ENCODE measurements at regions of chr14 and their contacts with region 1.

Region 1: GRCh38 chr14:34098045-34098984 is 147.4 kb upstream of the EGLN3 start:
- DNase-seq: peak; percentile 53
- H3K4me3 ChIP-seq: no peak overlapping the region
- H3K27ac ChIP-seq: no peak overlapping the region
- H3K4me1 ChIP-seq: peaks cover 13% of the 10 kb centered on the region
- H3K27me3 ChIP-seq: no peaks in the 10 kb centered on the region
- CTCF ChIP-seq: peak; percentile 52 to 69

Region 2: DNA sequence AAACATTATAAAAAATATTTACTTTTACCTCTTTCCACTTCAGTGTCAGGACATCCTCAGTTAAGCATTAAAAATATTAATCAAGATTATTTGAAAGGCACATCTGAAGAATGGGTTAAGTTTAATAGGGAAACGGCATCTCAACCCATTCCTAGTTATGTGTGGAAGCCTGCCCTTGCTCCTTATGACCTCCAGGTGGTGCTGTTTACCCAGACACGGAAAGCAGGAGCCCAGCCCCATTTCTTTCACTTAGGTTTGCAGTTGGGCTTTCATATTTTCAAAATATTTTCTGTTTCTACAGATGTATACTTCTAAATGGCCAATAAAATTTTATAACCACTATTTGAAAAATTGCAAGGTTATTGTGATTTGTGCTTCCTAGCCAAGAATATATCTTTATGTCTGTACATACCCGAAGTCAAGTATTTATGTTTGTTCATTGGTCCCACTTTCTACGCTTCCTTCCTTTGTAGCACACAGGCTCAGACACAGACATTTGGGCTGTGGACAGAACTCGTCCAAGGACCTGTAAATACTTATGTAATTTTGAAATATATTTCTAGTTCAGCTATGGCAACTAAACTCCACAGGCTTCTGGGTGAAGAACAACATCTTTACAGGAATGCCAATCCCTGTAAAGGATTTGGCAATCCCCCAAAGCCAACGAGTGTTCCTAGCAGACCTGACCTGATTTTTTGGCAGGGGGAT is 1522.1 kb before region 1 on chr14:
- CTCF ChIA-PET with region 1: no interaction called
- dilution Hi-C with region 1: no loop called
- in situ Hi-C with region 1: no loop called
- intact Hi-C with region 1: loop called (anchors 10 kb)
- DNase-seq: peak; percentile 21
- H3K4me3 ChIP-seq: no peak overlapping the region
- H3K27ac ChIP-seq: no peak overlapping the region
- H3K4me1 ChIP-seq: no peaks in the 10 kb centered on the region
- H3K27me3 ChIP-seq: no peaks in the 10 kb centered on the region
- CTCF ChIP-seq: peak; percentile 91 to 96

Region 3: DNA sequence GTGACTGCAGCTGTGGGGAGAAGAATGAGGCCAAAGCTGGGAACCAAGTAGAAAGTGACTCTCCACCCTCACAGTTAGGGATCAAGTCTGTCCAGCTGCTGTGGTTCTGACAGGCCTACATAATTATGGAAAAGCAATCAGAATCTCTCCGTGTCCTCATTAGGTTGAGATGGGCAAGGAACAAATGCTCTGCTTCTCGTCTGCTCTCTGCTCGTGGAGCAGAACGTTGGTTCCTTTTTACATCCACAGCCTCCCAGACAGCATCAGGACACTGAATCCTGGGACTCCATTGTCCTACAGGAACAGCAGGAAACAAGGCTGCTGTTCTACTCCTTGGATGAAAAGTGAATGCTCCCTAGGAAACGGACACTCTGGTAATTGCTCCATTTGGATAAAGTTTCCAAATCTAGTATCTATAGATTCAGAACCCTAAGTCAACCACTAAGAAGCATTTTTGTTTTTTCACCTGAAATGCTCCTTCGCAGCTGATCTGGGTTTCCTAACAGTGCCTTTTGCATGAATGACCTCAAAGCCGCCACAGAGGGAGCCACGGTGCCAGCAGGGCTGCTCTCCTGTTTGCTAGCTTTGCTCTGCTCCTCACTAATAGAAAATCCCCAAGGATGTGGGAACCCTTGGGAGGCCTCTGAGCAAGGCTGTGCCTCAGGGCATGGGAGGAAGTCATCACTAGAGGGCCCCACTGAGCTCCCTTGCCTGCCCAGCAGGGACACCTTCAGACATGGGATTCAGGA is 249.4 kb before region 1 on chr14:
- CTCF ChIA-PET with region 1: interaction called, 24 read pairs
- dilution Hi-C with region 1: no loop called
- in situ Hi-C with region 1: loop called in 1 of 2 experiments (anchors 10 kb)
- intact Hi-C with region 1: loop called (anchors 1 kb)
- DNase-seq: peak; percentile 63
- H3K4me3 ChIP-seq: no peak overlapping the region
- H3K27ac ChIP-seq: no peak overlapping the region
- H3K4me1 ChIP-seq: no peaks in the 10 kb centered on the region
- H3K27me3 ChIP-seq: no peaks in the 10 kb centered on the region
- CTCF ChIP-seq: peak; percentile 78 to 85

Region 4: GRCh38 chr14:33914676-33915516 is 183.4 kb before region 1 on chr14:
- CTCF ChIA-PET with region 1: no interaction called
- dilution Hi-C with region 1: no loop called
- in situ Hi-C with region 1: no loop called
- intact Hi-C with region 1: loop called (anchors 5 kb)
- DNase-seq: peak; percentile 68
- H3K4me3 ChIP-seq: no peak overlapping the region
- H3K27ac ChIP-seq: no peak overlapping the region
- H3K4me1 ChIP-seq: peaks cover 11% of the 10 kb centered on the region
- H3K27me3 ChIP-seq: no peaks in the 10 kb centered on the region
- CTCF ChIP-seq: no peak

Region 5: GRCh38 chr14:34030864-34031263 is 67.5 kb before region 1 on chr14:
- CTCF ChIA-PET with region 1: interaction called, 3 read pairs
- dilution Hi-C with region 1: no loop called
- in situ Hi-C with region 1: no loop called
- intact Hi-C with region 1: loop called (anchors 5 kb)
- DNase-seq: peak; percentile 45
- H3K4me3 ChIP-seq: no peak overlapping the region
- H3K27ac ChIP-seq: no peak overlapping the region
- H3K4me1 ChIP-seq: peaks cover 14% of the 10 kb centered on the region
- H3K27me3 ChIP-seq: no peaks in the 10 kb centered on the region
- CTCF ChIP-seq: no peak

Region 6: DNA sequence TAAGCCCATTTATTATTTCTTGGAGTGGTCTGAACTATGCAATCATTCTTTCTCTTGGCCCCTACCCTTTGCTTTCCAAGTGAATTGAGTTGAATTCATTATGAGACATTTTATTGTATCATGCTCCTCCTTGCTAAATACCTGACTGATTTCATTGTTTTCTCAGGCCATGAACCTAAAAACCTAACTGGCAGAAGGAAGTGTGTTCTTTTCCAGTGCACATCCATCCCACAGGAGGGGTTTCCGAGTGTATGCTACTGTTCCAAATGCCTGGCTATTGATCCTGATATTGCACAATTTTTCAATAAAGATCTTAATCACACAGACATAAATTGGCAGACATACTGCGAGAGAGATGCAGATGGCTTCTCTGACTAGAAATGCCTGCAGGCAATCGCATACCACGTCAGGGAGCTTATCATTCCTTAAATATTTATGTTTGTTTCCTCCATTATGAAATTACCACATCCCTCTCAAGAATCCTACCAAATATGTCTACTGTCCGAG is 14.7 kb after region 1 on chr14:
- CTCF ChIA-PET with region 1: no interaction called
- dilution Hi-C with region 1: no loop called
- in situ Hi-C with region 1: no loop called
- intact Hi-C with region 1: no loop called
- DNase-seq: peak; percentile 72
- H3K4me3 ChIP-seq: no peak overlapping the region
- H3K27ac ChIP-seq: peak overlapping the region; percentile 20
- H3K4me1 ChIP-seq: peaks cover 24% of the 10 kb centered on the region
- H3K27me3 ChIP-seq: no peaks in the 10 kb centered on the region
- CTCF ChIP-seq: no peak

Region 7: DNA sequence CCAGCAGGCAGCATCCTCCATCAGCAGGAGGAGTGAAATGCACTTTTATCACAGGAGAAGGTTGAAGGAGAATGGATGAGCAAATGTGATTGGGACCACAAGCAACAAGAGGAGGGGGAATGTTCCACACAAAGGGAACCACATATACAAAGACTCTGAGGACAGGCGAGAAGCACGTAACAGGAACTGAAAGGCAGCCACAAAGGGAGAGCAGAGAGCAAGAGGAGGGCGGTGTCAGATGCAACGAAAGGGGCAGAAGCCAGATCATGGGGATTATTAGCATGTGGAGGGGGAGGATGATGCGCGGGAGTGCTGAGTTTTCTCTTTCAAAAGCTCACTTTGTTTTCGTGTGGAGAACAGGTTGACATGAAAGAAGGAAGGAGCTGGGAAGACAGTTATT is 122.6 kb after region 1 on chr14:
- CTCF ChIA-PET with region 1: no interaction called
- dilution Hi-C with region 1: no loop called
- in situ Hi-C with region 1: no loop called
- intact Hi-C with region 1: no loop called
- DNase-seq: no peak
- H3K4me3 ChIP-seq: no peak overlapping the region
- H3K27ac ChIP-seq: no peak overlapping the region
- H3K4me1 ChIP-seq: peaks cover 24% of the 10 kb centered on the region
- H3K27me3 ChIP-seq: no peaks in the 10 kb centered on the region
- CTCF ChIP-seq: no peak

Region 8: GRCh38 chr14:34300882-34301734 is 202.8 kb after region 1 on chr14:
- CTCF ChIA-PET with region 1: interaction called, 6 read pairs
- dilution Hi-C with region 1: no loop called
- in situ Hi-C with region 1: no loop called
- intact Hi-C with region 1: loop called (anchors 1 kb)
- DNase-seq: peak; percentile 46
- H3K4me3 ChIP-seq: no peak overlapping the region
- H3K27ac ChIP-seq: no peak overlapping the region
- H3K4me1 ChIP-seq: peaks cover 18% of the 10 kb centered on the region
- H3K27me3 ChIP-seq: no peaks in the 10 kb centered on the region
- CTCF ChIP-seq: peak; percentile 70 to 71